ENCODE measurements at regions of chr3 and their contacts with region 1.

Region 1: GRCh38 chr3:196528639-196529233 is 13.6 kb upstream of the SMCO1 start:
- DNase-seq: peak; percentile 76
- H3K4me3 Mint-ChIP-seq: peak overlapping the region; percentile 76
- H3K27ac Mint-ChIP-seq: peak overlapping the region; percentile 75
- H3K4me1 Mint-ChIP-seq: peaks cover 8% of the 10 kb centered on the region
- H3K27me3 Mint-ChIP-seq: peaks cover 6% of the 10 kb centered on the region

Region 2: DNA sequence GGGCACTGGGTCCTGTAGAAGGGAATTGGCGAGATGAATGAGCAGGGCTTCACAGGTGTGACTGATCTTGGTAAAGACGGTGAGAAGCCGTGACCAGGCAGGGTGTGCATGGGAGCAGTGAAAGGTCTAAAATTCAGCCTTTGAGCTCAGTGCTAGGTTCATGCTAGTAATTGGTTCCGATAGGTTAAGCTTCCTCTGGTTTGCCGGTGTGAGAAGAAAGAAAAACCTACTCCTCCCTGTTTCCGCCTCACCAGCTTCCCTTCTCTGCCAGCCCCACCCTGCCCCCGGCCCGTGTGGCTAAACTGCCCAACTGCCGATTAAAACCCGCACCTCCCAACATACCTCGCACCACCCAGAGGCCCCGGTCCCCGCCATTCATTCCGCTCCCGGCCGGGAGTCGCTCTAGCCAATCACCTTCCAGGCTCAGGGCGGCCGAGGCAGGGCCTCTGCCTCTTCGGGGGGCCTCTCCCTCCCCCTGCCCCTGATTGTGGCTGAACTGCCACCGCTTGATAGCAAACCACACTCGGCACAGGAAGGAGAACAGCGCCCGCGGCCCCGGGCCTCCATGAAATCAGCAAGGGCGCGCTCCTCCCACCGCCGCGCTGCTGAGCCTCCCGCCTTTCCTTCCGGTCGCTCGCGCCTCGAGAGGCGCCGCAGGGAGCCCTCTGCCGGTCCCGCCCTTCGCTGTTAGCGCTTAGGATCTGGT is 103.5 kb after region 1 on chr3:
- intact Hi-C with region 1: loop called (anchors 2 kb)
- DNase-seq: peak; percentile 90
- H3K4me3 Mint-ChIP-seq: peak overlapping the region; percentile 86
- H3K27ac Mint-ChIP-seq: peak overlapping the region; percentile 93
- H3K4me1 Mint-ChIP-seq: peaks cover 52% of the 10 kb centered on the region
- H3K27me3 Mint-ChIP-seq: no peaks in the 10 kb centered on the region

Region 3: GRCh38 chr3:196643201-196643749 is 114.5 kb after region 1 on chr3:
- intact Hi-C with region 1: no loop called
- DNase-seq: no peak
- H3K4me3 Mint-ChIP-seq: no peak overlapping the region
- H3K27ac Mint-ChIP-seq: peak overlapping the region; percentile 2
- H3K4me1 Mint-ChIP-seq: peaks cover 79% of the 10 kb centered on the region
- H3K27me3 Mint-ChIP-seq: no peaks in the 10 kb centered on the region

Region 4: GRCh38 chr3:196932600-196932999 is 403.9 kb after region 1 on chr3:
- intact Hi-C with region 1: no loop called
- DNase-seq: no peak
- H3K4me3 Mint-ChIP-seq: no peak overlapping the region
- H3K27ac Mint-ChIP-seq: no peak overlapping the region
- H3K4me1 Mint-ChIP-seq: peaks cover 2% of the 10 kb centered on the region
- H3K27me3 Mint-ChIP-seq: no peaks in the 10 kb centered on the region